ENCODE measurements at regions of chr3 and their contacts with region 1.

Region 1: DNA sequence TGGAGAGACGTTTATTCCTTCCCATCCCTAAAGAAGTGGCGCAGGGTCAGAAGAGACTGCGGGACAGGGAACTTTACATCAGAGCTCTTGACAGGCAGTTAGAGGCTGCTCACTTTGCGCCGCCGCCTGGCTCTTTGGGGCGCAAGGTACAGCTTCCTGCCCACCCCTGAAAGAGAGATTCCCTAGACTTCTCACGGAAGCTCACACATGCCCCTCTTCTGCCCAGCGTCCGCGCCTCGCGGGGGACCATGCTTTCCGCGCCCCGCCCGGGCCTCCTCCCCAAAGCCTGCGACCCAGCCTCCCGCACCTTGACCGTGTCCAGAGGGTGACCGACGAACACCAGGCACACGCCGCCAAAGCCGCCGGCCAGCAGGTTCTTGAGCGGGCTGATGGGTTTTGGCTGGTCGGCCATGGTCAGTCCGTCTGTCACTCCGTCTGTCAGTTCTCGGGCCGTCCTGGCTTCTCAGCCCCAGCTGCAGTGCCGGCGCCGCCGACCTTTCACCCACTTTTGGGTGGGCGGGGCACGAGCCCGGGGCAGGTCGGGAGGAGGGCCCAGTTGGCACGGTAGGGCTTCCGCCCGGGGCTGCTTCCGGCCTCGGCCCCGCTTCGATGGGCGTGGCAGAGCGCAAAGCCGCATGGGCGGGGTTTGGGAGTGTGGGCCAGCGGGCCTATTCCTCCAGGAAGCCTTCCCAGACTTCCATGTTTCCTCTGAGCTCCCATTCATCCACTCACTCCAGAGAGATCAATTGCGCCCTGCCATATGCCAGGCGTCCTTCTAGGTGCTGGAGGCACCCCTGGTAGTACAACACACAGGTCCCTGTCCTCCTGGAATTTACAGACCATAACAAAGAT is at the start of gene SLC25A20:
- DNase-seq: peak; percentile 96
- ATAC-seq: peak; percentile 94
- H3K4me3 Mint-ChIP-seq: peak within 1 kb of the TSS; percentile 86
- H3K27ac Mint-ChIP-seq: peak within 1 kb of the TSS; percentile 92
- H3K4me1 Mint-ChIP-seq: peaks cover 44% of the 10 kb centered on the region
- H3K27me3 Mint-ChIP-seq: no peaks in the 10 kb centered on the region
- total RNA-seq, gene SLC25A20: 26.7 to 35.6 TPM

Region 2: GRCh38 chr3:48739955-48740823 is 158.4 kb before region 1 on chr3:
- CTCF ChIA-PET with region 1: interaction called, 22 read pairs
- DNase-seq: peak; percentile 70
- ATAC-seq: peak; percentile 97
- H3K4me3 Mint-ChIP-seq: no peak overlapping the region
- H3K27ac Mint-ChIP-seq: no peak overlapping the region
- H3K4me1 Mint-ChIP-seq: peaks cover 2% of the 10 kb centered on the region
- H3K27me3 Mint-ChIP-seq: no peaks in the 10 kb centered on the region

Region 3: DNA sequence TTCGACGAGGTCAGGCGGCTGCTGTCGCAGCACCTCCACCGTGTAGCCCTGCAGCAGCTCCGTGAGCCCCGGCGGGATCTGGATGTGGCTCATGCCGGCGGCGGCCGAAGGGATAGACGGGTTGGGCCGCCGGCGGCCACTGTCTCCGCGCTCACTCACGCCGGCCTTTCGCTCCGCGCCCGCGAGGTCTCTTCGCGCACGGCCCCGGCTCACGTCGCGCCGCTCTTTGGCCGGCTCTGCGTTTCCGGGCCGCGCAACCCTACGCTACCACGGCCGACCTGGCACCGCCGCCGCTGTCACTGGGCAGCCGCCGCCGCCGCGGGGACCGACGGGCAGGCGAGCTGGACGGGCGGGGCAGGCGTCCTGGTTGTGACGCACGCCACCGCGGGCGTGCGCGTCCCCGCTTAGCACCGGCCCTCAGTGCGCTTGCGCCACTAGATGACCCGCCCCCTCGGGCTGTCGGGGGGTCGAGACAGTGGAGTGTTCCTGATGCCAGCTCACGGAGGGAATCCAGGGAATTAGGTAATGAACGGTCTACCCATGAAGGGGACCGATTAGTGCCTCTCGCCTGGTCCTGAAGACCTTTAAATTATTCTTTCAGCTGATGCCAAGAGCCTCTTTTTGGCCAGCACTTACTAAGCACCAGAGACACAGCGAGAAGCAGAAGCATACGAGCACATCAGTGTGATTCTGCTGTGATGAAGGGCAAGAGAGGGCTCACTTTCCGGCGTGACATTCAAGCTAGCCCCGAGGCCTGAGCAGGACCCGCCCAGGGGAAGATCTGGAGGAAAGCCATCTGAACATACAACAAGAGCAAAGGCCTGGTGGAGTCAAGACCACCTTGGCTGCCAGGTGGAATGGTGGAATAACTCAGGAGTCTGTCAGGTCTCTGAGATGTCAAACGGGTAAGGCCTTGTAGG is 50.8 kb before region 1 on chr3 and contains the start of gene PRKAR2A:
- CTCF ChIA-PET with region 1: interaction called, 12 read pairs
- DNase-seq: peak; percentile 86
- ATAC-seq: peak; percentile 87
- H3K4me3 Mint-ChIP-seq: peak within 1 kb of the TSS; percentile 80
- H3K27ac Mint-ChIP-seq: peak within 1 kb of the TSS; percentile 77
- H3K4me1 Mint-ChIP-seq: peaks cover 27% of the 10 kb centered on the region
- H3K27me3 Mint-ChIP-seq: no peaks in the 10 kb centered on the region
- total RNA-seq, gene PRKAR2A: 27.9 to 33.0 TPM

Region 4: GRCh38 chr3:48918388-48919214 is 20.0 kb after region 1 on chr3 and contains the start of gene ARIH2:
- CTCF ChIA-PET with region 1: interaction called, 31 read pairs
- DNase-seq: peak; percentile 96
- ATAC-seq: peak; percentile 84
- H3K4me3 Mint-ChIP-seq: peak within 1 kb of the TSS; percentile 85
- H3K27ac Mint-ChIP-seq: peak within 1 kb of the TSS; percentile 100
- H3K4me1 Mint-ChIP-seq: peaks cover 27% of the 10 kb centered on the region
- H3K27me3 Mint-ChIP-seq: no peaks in the 10 kb centered on the region
- total RNA-seq, gene ARIH2: 118 to 156 TPM

Measured in activated CD8-positive, alpha-beta memory T cell treated with anti-CD3 and anti-CD28 coated beads, Interleukin-2, amount 10 ng/mL, durations not matched to agents 7 days and 5 days (primary cell).